Spleen (tissue), 13 donors: ENCODE measurements at regions of chr17 and their contacts with region 1.

Region 1: GRCh38 chr17:68462381-68463210 is 5.3 kb upstream of the WIPI1 start:
- DNase-seq: no peak
- H3K4me3 ChIP-seq: no peak overlapping the region
- H3K27ac ChIP-seq: peak overlapping the region in 2 of 8 donors; percentile 27 to 75
- H3K4me1 ChIP-seq: peaks cover 5 to 59% (median 47%) of the 10 kb centered on the region in 6 donors
- H3K27me3 ChIP-seq: no peaks in the 10 kb centered on the region
- CTCF ChIP-seq: peak; percentile 64 to 86 (median 79)
- POLR2A ChIP-seq: no peak

Region 2: DNA sequence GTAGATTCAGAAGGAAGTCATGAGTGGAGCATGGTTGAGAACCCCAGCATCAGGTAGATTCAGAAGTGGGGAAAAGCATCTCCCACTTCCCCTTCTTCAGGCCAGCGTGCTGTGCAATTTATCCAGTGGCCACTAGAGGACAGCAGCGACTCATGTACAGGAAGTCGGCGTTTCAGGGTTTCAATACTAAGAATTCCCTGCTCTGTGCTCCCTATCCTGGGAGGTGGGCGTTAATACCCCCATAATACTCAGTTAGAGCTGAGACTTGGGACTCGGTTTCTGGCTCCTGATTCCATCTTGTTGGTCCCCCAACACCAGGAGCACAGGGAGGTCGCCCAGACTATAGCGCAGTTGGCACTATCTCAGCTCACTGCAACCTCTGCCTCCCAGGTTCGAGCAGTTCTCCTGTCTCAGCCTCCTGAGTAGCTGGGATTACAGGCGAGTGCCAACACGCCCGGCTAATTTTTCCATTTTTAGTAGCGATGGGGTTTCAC is 290.1 kb before region 1 on chr17:
- intact Hi-C with region 1: loop called (anchors 10 kb)
- DNase-seq: peak; percentile 88
- H3K4me3 ChIP-seq: no peak overlapping the region
- H3K27ac ChIP-seq: no peak overlapping the region
- H3K4me1 ChIP-seq: peaks cover 0 to 9% (median 3%) of the 10 kb centered on the region in 6 donors
- H3K27me3 ChIP-seq: no peaks in the 10 kb centered on the region
- CTCF ChIP-seq: peak; percentile 83 to 99 (median 95)
- POLR2A ChIP-seq: no peak

Region 3: DNA sequence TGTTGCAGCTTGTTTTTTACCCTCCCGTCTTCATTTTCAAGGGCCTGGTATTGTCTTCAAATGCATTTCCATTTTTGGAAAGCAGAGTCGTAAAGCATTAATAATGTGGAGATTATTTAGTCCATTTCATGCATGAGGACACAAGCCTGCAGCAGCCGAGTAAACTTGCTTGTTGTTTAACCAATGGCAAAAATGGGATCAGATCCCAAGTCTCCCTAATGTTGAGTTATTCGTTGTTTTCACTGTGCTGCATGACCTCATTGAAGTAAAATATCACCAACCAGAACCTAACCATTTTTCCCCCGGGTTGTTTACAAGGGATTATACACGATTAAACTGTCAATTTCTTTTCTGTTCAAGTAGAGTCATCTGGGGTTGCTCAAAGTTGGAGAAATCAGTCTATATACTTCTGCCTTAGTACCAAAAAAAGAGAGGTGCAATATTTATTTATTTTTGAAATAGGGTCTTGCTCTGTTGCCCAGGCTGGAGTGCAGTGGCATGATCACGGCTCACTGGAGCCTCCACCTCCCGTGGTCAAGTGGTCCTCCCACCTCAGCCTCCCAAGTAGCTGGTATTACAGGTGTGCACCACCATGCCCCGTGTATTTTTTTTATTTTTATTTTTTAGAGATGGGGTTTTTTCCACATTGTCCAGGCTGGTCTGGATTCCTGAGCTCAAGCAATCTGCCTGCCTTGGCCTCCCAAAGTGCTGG is 202.4 kb before region 1 on chr17:
- intact Hi-C with region 1: loop called (anchors 10 kb)
- DNase-seq: no peak
- H3K4me3 ChIP-seq: no peak overlapping the region
- H3K27ac ChIP-seq: no peak overlapping the region
- H3K4me1 ChIP-seq: peaks cover 23 to 74% (median 48%) of the 10 kb centered on the region in 6 donors
- H3K27me3 ChIP-seq: no peaks in the 10 kb centered on the region
- CTCF ChIP-seq: no peak
- POLR2A ChIP-seq: no peak